Ascending aorta (tissue), 2 donors: ENCODE measurements at regions of chr16 and their contacts with region 1.

Region 1: DNA sequence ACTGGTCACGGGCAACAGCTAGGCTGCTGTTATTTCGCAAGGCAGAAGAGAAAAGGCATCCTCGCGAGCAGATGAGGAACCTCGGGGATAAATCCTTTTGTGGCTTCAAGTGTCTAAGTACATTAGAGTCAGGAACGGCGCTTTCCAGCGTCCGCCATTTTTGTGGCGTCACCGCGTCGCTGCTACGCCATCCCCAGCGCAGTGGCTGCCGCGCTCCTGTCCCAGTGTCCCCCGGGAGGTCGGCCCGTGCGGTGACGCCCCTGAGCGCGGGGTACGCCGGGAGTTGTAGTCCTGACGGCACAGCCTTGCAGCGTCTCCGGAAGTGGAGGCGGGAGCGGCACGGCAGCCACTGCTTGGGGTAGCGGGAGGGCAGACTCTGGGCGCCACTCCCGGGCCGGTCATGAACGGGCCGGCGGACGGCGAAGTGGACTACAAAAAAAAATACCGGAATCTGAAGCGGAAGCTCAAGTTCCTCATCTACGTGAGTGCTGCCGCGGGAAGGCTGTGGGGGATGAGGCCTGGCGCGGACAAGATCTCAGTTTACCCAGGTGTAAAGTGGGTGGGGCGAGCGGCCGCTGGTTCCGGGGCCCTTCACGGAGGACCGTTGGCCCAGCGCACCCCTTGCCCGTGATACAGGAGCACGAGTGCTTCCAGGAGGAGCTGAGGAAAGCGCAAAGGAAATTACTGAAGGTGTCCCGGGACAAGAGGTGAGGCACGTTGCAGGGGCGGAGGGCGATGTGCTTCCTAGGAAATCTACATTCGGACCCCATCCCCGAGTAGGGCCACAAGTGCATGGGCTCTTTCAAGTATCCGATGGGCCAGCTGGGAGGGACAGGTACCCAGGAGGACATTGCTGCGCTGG is at the start of gene INO80E:
- DNase-seq: peak; percentile 91 to 99
- H3K4me3 ChIP-seq: peak within 1 kb of the TSS; percentile 69 to 77
- H3K27ac ChIP-seq: peak within 1 kb of the TSS; percentile 84 to 91
- H3K4me1 ChIP-seq: peaks cover 4 to 15% of the 10 kb centered on the region in 2 donors
- H3K27me3 ChIP-seq: no peaks in the 10 kb centered on the region
- CTCF ChIP-seq: no peak
- total RNA-seq, gene INO80E: 44.1 TPM

Region 2: GRCh38 chr16:29815793-29816693 is 180.1 kb before region 1 on chr16 and contains the start of gene PAGR1:
- intact Hi-C with region 1: loop called (anchors 5 kb)
- DNase-seq: peak; percentile 96 to 100
- H3K4me3 ChIP-seq: peak within 1 kb of the TSS; percentile 62 to 70
- H3K27ac ChIP-seq: peak within 1 kb of the TSS; percentile 88 to 94
- H3K4me1 ChIP-seq: peaks cover 0 to 39% of the 10 kb centered on the region in 2 donors
- H3K27me3 ChIP-seq: no peaks in the 10 kb centered on the region
- CTCF ChIP-seq: peak; percentile 82 to 91 (median 90)
- total RNA-seq, gene PAGR1: 54.3 TPM

Region 3: DNA sequence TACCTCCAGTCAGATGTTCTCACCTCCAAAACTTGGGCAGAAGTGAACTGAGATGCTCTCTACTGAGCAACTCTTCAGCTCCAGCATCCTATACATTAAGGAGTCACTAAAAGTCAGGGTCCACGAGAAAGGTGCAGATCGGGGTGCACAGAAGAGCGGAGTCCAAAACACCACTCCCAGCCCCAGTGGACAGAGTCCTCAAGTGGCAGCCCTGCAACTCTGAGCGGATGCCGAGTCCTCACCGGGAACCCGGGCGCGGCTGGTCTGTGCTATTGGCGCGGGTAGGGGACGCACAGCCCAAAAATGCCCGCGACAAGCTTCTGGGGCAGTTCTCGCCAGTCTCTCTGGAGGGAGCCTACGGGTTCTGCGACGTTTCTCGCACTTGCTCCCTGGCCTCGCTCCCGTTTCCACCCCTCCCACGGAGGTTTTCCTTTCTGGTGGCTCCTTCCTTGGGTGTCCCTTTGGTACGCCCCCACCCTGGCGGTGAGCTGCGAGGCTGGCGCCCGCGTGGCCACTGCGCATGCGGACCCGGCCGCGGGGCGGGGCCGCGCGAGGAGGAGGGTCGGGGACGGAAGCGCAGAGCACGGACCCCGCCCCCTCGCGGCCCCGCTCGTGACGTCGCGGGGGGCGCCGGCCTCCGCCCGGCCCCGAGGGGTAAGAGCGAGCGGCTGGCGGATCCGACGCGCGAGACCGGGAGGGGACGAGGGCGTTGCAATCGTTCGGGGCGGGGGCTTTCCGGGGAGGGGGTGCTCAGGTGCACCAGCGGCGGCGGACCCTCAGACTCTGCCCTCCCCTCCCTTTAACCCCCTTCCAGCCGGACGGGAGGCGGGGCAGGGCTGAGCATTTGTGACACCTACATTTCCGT is 34.4 kb before region 1 on chr16 and contains the start of gene TMEM219:
- intact Hi-C with region 1: loop called (anchors 2 kb)
- DNase-seq: peak; percentile 73 to 97
- H3K4me3 ChIP-seq: peak within 1 kb of the TSS; percentile 71 to 75
- H3K27ac ChIP-seq: peak within 1 kb of the TSS; percentile 85 to 94
- H3K4me1 ChIP-seq: peaks cover 0 to 5% of the 10 kb centered on the region in 2 donors
- H3K27me3 ChIP-seq: no peaks in the 10 kb centered on the region
- CTCF ChIP-seq: peak; percentile 37 to 80 (median 42)
- total RNA-seq, gene TMEM219: 49.2 TPM

Region 4: DNA sequence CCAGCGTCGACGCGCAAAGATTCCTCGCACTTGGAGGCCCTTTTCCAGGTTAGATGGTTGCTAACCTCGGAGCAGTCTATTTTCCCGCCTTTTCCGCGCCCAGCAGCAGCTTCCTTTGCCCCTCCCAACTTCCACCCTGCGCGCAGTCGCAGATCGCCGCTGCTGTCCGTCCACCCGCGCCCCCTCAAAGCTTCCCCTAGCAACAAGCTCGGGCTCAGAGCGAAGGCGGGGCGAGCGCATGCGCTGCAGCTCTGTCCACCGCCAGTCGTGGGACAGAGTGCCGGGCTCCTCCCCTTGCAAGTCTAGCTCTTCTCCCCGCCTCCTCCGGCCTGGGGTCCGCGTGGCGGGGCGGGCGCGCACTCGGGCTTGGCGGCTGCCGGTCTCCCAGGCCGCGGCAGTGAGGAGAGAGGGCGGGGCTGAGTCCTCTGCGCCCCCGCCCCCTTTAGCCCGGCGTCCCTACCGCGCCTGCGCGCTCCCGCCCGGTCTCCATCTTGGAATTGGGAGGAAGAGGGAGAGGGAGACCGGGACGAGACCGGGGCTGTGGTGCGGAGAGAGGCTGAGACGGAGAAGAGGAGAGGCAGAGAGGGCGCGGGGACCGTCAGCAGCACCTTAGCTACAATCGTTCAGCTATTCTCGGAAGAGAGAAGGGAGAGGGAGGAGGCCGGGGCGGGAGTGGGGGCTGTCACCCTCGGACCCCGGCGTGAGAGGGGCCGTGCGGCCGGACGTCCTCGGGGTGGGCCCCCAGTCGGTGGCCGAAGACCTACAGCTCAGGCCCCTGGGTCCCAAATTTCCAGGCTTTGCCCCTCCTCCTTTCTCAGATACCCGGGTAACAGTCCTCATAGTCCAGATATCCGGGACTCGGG is 22.5 kb before region 1 on chr16 and contains the start of gene TAOK2:
- intact Hi-C with region 1: loop called (anchors 1 kb)
- DNase-seq: peak; percentile 94 to 99
- H3K4me3 ChIP-seq: peak within 1 kb of the TSS; percentile 80 to 93
- H3K27ac ChIP-seq: peak within 1 kb of the TSS; percentile 85 to 90
- H3K4me1 ChIP-seq: peaks cover 12 to 24% of the 10 kb centered on the region in 2 donors
- H3K27me3 ChIP-seq: no peaks in the 10 kb centered on the region
- CTCF ChIP-seq: no peak
- total RNA-seq, gene TAOK2: 101 TPM

Region 5: GRCh38 chr16:29984137-29984763 is 11.9 kb before region 1 on chr16:
- intact Hi-C with region 1: no loop called
- DNase-seq: no peak
- H3K4me3 ChIP-seq: no peak overlapping the region
- H3K27ac ChIP-seq: no peak overlapping the region
- H3K4me1 ChIP-seq: no peaks in the 10 kb centered on the region
- H3K27me3 ChIP-seq: no peaks in the 10 kb centered on the region
- CTCF ChIP-seq: no peak

Region 6: DNA sequence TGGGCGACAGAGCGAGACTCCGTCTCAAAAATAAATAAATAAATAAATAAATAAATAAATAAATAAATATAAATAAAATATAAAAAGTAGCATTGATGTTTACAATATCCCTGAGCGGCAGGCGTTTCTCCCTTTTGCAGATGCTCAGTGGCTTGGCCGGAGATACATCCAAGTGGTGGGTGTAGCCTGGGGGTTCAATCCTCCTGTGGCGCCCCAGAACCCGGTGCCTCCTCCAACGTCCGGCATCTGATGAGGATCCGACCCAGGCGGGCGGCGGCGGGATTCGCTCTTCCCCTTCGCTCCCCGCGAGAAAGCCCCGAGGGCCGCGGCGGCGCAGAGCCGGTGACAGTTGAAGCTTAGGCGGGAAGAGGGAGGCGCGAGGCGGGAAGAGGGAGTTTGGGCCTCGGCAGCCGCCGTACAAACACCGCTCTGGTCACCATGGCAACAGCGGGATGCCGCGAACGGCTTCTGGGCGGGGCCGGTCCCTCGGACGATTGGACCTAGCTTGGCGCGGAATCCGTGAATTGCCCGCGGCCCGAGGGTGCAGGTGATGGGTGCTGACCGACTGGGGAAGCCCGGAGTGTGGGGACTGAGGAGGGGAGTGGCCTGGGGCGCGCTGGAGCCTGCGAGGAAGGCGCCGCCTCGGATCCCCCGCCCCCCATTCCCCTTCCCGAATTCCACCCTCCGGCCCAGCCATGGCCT is 56.7 kb after region 1 on chr16:
- intact Hi-C with region 1: loop called (anchors 5 kb)
- DNase-seq: peak in 1 of 2 donors; percentile 94
- H3K4me3 ChIP-seq: peak overlapping the region; percentile 79 to 88
- H3K27ac ChIP-seq: peak overlapping the region; percentile 41 to 59
- H3K4me1 ChIP-seq: peaks cover 0 to 12% of the 10 kb centered on the region in 2 donors
- H3K27me3 ChIP-seq: no peaks in the 10 kb centered on the region
- CTCF ChIP-seq: no peak

Region 7: DNA sequence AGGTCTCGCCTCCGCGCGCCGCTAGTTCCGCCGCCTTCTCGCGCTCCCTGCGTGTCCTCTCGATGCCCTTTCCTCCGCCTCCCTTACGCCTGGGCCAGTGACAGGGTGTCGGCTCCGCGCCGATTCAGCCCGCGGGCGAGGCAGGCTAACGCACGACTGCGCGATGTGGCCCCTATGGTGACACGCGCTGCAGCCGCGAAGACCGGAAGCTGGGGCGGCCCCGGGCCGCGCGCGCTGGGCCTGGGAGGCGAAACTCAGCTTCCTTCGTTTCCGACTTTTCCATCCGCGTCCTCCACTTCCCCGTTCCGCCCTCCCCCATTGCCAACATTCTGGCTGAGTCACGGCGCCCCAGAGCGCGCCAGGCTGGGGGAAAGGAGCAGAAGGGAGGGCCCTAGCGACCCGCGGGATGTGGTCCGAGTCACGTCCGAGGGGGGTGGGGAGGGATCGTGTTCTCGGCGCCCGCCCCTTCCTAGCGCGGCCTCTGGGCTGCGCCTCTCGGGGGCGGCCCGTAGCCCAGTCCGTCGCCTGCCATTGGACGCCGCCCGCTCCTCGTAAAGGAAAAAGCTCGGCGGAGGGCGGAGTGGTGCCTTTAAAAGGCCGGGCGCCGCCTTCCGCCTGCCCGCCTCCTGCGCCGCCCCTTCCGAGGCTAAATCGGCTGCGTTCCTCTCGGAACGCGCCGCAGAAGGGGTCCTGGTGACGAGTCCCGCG is 69.2 kb after region 1 on chr16 and contains the start of gene ALDOA:
- intact Hi-C with region 1: no loop called
- DNase-seq: peak; percentile 93 to 99
- H3K4me3 ChIP-seq: peak within 1 kb of the TSS; percentile 92
- H3K27ac ChIP-seq: peak within 1 kb of the TSS; percentile 97 to 99
- H3K4me1 ChIP-seq: peaks cover 22 to 51% of the 10 kb centered on the region in 2 donors
- H3K27me3 ChIP-seq: no peaks in the 10 kb centered on the region
- CTCF ChIP-seq: no peak
- total RNA-seq, gene ALDOA: 1,202 TPM